ENCODE measurements at regions of chr12 and their contacts with region 1.

Region 1: DNA sequence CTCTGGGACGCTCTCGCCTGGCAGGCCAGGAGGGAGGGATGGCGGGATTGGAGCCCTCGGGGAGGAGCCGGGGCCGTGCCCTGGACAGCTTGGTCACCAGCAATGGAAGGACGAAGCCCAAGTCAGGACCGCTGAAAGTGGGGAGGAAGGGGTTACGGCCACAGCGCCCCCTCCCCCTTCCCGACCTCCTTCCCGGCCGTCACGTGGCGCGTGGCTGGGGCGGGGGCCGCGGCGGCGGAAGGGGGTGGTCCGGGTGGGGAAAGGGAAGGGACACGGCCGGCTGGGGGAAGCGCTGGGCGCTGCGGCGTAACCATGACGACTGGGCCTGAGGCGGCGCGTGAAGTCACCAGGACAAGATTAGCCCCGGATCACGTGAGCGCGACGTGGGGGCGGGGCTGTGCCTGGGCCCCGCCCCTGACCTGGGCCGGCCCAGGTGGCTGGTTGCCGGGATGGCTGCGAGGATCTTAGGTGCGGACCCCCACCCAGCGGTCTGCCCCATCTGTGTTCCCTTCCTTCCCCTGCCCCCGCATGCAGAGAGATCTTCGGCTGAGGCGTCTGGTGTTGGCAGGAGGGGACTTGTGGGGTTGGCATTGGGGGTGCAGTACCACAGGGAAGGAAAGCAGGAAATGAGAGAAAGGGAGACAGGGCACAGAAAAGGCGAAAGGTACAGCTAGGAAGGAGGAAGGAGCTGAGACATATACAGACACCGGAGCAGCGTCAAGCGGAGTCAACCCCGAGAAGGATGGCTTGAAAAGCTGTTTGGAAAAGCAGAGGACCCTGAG is 6.2 kb downstream of the MAP3K12 start:
- DNase-seq: peak; percentile 90
- H3K4me3 ChIP-seq: peak overlapping the region; percentile 69
- H3K27ac ChIP-seq: peak overlapping the region; percentile 58
- H3K4me1 ChIP-seq: peaks cover 46% of the 10 kb centered on the region
- CTCF ChIP-seq: peak; percentile 28

Region 2: GRCh38 chr12:53472056-53472582 is 20.9 kb before region 1 on chr12:
- CTCF ChIA-PET with region 1: no interaction called
- POLR2A ChIA-PET with region 1: interaction called, 15 read pairs
- intact Hi-C with region 1: no loop called
- DNase-seq: no peak
- H3K4me3 ChIP-seq: no peak overlapping the region
- H3K27ac ChIP-seq: no peak overlapping the region
- H3K4me1 ChIP-seq: peaks cover 19% of the 10 kb centered on the region
- CTCF ChIP-seq: no peak

Measured in OCI-LY7 (cell line).